PC-3 (cell line): ENCODE measurements at regions of chr2 and their contacts with region 1.

Region 1: GRCh38 chr2:120693121-120693520 is 42.5 kb upstream of the GLI2 start:
- DNase-seq: peak; percentile 22
- ATAC-seq: no peak
- H3K4me3 ChIP-seq: no peak overlapping the region
- H3K27ac ChIP-seq: no peak overlapping the region
- H3K4me1 ChIP-seq: peaks cover 6% of the 10 kb centered on the region; the same call in 1 of the 2 replicates
- H3K27me3 ChIP-seq: no peaks in the 10 kb centered on the region
- CTCF ChIP-seq: no peak

Region 2: DNA sequence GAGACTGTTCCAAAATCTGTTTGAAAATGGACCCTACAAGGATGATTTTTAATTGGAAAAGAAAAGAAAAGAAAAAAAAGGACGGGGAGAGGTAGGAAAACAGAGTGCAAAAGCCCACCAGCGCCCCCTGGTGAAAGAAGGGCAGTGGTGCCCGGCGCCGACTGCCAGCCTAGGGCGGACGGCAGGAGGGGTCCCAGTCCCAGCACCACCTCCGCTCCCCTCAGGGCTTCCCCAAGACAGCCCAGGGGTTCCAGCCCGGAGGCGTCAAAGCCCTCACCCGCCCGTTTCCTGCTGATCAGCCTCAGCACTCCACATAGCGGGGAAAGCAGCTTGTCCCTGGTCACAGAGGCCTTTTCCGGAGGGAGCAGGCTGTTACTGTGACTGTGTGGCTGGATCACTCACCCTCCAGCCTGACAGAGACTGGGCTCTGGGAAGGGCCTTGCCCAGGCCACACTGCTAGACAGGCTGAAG is 377.9 kb after region 1 on chr2:
- CTCF ChIA-PET with region 1: interaction called, 5 read pairs
- POLR2A ChIA-PET with region 1: interaction called, 8 read pairs
- intact Hi-C with region 1: loop called (anchors 1 kb)
- DNase-seq: peak; percentile 75
- ATAC-seq: peak; percentile 51
- H3K4me3 ChIP-seq: no peak overlapping the region
- H3K27ac ChIP-seq: no peak overlapping the region
- H3K4me1 ChIP-seq: peaks cover 14% of the 10 kb centered on the region
- H3K27me3 ChIP-seq: no peaks in the 10 kb centered on the region
- CTCF ChIP-seq: peak; percentile 94

Region 3: DNA sequence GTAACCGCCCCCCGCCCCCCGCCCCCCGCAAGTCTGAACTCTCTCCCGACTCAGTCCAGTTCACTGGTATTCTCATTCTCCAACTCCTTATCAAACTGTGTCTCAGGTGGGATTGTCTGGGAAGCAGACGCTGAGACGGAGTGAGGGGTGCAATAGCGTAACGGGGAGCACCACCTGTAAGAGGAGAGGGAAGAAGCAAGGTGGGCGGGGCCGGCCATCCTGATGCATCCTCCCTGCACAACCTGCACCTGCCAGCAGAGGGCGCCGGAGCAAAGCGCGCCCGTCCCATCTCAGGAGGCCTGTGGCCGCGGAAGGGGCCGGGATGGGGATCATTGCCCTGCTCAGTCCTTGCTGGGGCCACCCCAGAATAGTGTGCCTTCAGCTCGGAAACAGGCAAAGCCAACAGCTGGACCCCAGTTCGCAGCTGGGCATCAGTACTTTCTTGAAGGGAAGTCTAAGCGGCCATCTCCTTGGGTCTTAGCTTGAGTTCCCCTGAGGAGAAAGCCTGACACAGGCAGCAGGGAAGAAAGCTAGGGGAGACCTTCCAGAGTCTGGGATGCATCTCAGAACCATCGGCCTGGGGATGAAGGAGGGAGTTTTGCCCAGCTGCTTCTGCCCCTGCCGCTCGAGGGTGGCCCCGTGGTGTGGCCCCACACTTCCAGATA is 383.9 kb after region 1 on chr2:
- CTCF ChIA-PET with region 1: interaction called, 11 read pairs
- POLR2A ChIA-PET with region 1: interaction called, 8 read pairs
- intact Hi-C with region 1: loop called (anchors 1 kb)
- DNase-seq: peak; percentile 81
- ATAC-seq: peak; percentile 48
- H3K4me3 ChIP-seq: peak overlapping the region; percentile 38; the same call in 1 of the 2 replicates
- H3K27ac ChIP-seq: no peak overlapping the region
- H3K4me1 ChIP-seq: peaks cover 30% of the 10 kb centered on the region
- H3K27me3 ChIP-seq: no peaks in the 10 kb centered on the region
- CTCF ChIP-seq: peak; percentile 96